ENCODE measurements at regions of chr21 and their contacts with region 1.

Region 1: DNA sequence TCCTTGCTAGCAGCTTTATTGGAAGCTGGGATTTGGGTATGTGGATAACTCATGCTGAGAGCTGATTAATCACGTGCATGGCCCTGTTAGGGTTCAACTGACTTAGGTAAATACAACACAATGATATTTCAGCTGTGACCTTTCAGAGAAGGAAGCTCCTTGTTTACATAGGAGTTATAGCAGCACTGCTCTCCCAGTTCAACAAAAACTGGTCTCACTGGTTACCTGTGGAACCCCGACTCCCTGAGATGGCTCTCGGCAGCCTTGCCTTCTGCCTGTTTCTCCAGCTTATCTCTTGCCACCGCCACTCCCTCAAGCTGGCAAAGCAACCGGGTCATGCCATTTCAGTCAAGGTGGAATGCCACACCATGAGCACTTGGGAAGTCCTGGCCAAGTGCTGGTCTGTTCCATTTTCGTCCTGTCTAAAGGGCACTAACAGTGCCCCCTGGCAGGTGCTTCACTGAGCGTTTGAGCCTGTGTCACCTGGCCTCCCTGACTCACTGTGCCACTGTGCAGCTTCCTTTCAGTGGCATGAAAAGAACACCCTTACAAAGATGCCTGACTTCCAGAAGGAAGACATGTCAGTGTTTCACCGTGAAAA is 31.6 kb downstream of the DOP1B start:
- DNase-seq: peak; percentile 76
- ATAC-seq: peak; percentile 81

Region 2: DNA sequence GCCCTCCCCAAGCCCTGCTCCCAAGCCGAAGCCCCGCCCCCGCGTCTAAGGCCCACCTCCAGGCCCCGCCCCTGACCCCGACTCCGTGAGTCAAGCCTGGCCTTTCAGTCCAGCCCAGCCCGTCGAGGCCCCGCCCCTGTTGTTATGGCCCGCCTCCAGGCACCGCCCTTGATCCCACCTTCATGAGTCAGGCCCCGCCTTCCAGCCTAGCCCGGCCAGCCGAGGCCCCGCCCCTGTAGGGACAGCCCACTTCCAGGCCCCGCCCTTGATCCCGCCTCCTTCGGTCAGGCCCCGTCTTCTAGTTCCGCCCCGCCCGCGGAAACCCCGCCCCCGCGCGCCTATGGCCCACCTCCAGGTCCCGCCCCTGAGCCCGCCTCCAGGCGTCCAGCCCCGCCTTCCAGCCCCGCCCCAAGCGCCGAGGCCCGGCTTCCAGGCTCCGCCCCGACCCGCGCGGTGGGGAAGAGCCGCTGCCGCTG is 31.8 kb before region 1 on chr21:
- intact Hi-C with region 1: loop called (anchors 2 kb)
- DNase-seq: peak; percentile 100
- ATAC-seq: peak; percentile 96

Measured in Right ventricle myocardium inferior (tissue), 1 donor.